AG04450 (cell line): ENCODE measurements at regions of chr11 and their contacts with region 1.

Region 1: GRCh38 chr11:117107701-117108590 is 9.7 kb upstream of the SIK3 start:
- DNase-seq: no peak
- H3K4me3 ChIP-seq: no peak overlapping the region
- H3K27ac ChIP-seq: no peak overlapping the region
- H3K27me3 ChIP-seq: no peaks in the 10 kb centered on the region
- CTCF ChIP-seq: no peak

Region 2: GRCh38 chr11:116742104-116742503 is 365.8 kb before region 1 on chr11:
- CTCF ChIA-PET with region 1: interaction called, 12 read pairs
- POLR2A ChIA-PET with region 1: no interaction called
- DNase-seq: no peak
- H3K4me3 ChIP-seq: no peak overlapping the region
- H3K27ac ChIP-seq: no peak overlapping the region
- H3K27me3 ChIP-seq: no peaks in the 10 kb centered on the region
- CTCF ChIP-seq: no peak

Region 3: GRCh38 chr11:116871248-116871647 is 236.7 kb before region 1 on chr11:
- CTCF ChIA-PET with region 1: interaction called, 13 read pairs
- POLR2A ChIA-PET with region 1: no interaction called
- DNase-seq: no peak
- H3K4me3 ChIP-seq: no peak overlapping the region
- H3K27ac ChIP-seq: no peak overlapping the region
- H3K27me3 ChIP-seq: no peaks in the 10 kb centered on the region
- CTCF ChIP-seq: no peak

Region 4: DNA sequence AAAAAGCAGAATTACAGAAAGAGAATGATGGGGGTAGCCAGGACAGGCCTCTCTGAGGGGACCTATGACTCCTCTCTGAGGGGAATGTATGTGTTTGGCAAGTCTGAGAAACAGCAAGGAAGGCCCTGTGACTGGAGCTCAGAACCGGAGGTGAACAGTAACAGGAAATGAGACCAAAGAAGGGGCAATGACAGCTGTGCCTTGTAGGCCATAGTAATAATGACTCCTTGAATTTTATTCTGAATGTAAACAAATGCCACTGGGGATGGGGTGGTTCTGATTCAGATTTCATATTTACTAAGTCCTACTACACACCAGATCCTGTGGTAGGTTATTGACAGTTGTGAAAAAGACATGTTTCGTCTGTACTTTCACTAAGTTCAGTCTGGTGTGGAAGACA is 217.8 kb before region 1 on chr11:
- CTCF ChIA-PET with region 1: interaction called, 12 read pairs
- POLR2A ChIA-PET with region 1: no interaction called
- DNase-seq: no peak
- H3K4me3 ChIP-seq: no peak overlapping the region
- H3K27ac ChIP-seq: no peak overlapping the region
- H3K27me3 ChIP-seq: no peaks in the 10 kb centered on the region
- CTCF ChIP-seq: no peak

Region 5: GRCh38 chr11:117037279-117037974 is 70.5 kb before region 1 on chr11:
- CTCF ChIA-PET with region 1: no interaction called
- POLR2A ChIA-PET with region 1: no interaction called
- DNase-seq: no peak
- H3K4me3 ChIP-seq: no peak overlapping the region
- H3K27ac ChIP-seq: no peak overlapping the region
- H3K27me3 ChIP-seq: no peaks in the 10 kb centered on the region
- CTCF ChIP-seq: no peak

Region 6: GRCh38 chr11:117160826-117161225 is 52.9 kb after region 1 on chr11:
- CTCF ChIA-PET with region 1: no interaction called
- POLR2A ChIA-PET with region 1: no interaction called
- DNase-seq: no peak
- H3K4me3 ChIP-seq: no peak overlapping the region
- H3K27ac ChIP-seq: no peak overlapping the region
- H3K27me3 ChIP-seq: no peaks in the 10 kb centered on the region
- CTCF ChIP-seq: no peak

Region 7: DNA sequence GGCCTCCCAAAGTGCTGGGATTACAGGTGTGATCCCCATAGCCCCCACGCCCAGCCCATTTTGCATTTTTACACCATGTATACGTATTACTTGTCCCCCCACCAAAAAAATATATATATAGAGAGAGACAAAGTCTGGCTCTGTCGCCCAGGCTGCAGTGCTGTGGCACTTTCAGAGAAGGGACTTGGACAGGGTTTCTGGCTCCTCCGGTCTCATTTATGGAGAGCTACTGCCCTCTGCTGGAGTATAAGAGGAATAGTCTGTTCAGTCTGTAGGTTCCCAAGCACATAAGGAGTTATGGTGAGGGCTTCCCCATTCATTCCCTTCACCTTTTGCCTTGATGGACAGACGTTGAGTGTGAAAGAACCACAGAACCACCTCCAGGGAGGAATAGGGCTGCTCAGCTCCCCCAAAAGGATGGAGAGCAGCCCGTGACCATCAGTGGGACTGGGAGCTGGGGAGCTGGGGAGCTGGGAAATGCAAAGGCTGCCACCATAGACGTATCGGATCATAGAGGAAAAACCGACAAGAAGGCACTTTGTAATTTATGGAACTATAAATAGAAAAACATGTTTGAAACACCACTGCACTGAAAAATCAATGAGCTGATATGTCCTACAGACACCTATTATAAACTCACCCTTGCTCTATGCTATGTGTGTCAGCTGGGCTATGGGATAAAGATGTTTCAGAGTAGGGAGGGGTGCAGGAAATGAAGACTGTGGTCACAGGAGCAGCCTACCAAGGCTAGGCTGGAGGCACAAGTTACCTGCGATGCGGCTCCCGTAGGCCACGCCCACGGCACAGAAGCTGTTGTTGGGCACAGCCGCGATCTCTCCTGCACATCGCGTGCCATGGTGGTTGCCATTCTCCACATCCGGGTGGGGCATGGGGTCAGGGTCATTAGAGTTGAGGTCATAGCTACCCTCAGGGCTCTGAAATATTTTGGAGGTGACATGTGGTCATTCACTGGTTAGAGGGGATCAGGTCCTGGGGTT is 118.7 kb after region 1 on chr11:
- CTCF ChIA-PET with region 1: interaction called, 40 read pairs
- POLR2A ChIA-PET with region 1: no interaction called
- DNase-seq: no peak
- H3K4me3 ChIP-seq: no peak overlapping the region
- H3K27ac ChIP-seq: peak overlapping the region; percentile 11
- H3K27me3 ChIP-seq: no peaks in the 10 kb centered on the region
- CTCF ChIP-seq: peak; percentile 79